Activated CD8-positive, alpha-beta T cell treated with anti-CD3 and anti-CD28 coated beads, Interleukin-2, amount 10 ng/mL, durations not matched to agents 7 days and 5 days (primary cell): ENCODE measurements at regions of chr1 and their contacts with region 1.

Region 1: GRCh38 chr1:200628223-200628881 is 7.8 kb upstream of the KIF14 start:
- DNase-seq: peak; percentile 40
- ATAC-seq: peak; percentile 62
- H3K4me3 Mint-ChIP-seq: no peak overlapping the region
- H3K27ac Mint-ChIP-seq: peak overlapping the region; percentile 35
- H3K4me1 Mint-ChIP-seq: peaks cover 36% of the 10 kb centered on the region
- H3K27me3 Mint-ChIP-seq: peaks cover 3% of the 10 kb centered on the region

Region 2: GRCh38 chr1:200669314-200670241 is 41.2 kb after region 1 on chr1 and contains the start of gene DDX59:
- CTCF ChIA-PET with region 1: interaction called, 51 read pairs
- POLR2A ChIA-PET with region 1: interaction called, 22 read pairs
- DNase-seq: peak; percentile 91
- ATAC-seq: peak; percentile 94
- H3K4me3 Mint-ChIP-seq: peak within 1 kb of the TSS; percentile 97
- H3K27ac Mint-ChIP-seq: peak within 1 kb of the TSS; percentile 96
- H3K4me1 Mint-ChIP-seq: peaks cover 36% of the 10 kb centered on the region
- H3K27me3 Mint-ChIP-seq: no peaks in the 10 kb centered on the region
- total RNA-seq, gene DDX59: 24.1 to 27.8 TPM